KBM-7 (cell line): ENCODE measurements at regions of chr12 and their contacts with region 1.

Region 1: DNA sequence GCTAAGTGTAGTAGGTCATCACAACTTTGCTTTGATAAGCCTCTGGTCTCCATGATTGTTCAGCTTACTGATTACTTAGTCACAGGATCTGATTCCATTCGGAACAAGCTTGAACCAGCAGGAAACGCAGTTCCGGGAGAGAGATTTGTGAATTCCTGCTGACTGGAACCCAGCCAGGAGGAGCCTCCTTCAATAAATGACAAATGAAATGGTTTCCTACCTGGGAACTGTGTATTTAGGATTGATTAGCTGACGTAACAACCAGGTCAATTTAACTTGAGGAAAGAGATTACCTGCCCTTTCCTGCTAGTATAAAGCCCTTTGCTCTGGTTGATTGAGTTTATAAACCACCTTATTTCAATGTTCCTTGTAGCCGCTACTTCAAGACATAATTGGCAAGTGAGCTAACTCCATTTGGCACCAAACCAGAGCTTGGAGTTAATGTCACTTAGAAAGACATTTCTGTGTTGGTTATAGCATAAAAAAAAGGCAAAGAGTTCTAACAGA is 35.1 kb upstream of the KCNH3 start:
- DNase-seq: no peak

Region 2: DNA sequence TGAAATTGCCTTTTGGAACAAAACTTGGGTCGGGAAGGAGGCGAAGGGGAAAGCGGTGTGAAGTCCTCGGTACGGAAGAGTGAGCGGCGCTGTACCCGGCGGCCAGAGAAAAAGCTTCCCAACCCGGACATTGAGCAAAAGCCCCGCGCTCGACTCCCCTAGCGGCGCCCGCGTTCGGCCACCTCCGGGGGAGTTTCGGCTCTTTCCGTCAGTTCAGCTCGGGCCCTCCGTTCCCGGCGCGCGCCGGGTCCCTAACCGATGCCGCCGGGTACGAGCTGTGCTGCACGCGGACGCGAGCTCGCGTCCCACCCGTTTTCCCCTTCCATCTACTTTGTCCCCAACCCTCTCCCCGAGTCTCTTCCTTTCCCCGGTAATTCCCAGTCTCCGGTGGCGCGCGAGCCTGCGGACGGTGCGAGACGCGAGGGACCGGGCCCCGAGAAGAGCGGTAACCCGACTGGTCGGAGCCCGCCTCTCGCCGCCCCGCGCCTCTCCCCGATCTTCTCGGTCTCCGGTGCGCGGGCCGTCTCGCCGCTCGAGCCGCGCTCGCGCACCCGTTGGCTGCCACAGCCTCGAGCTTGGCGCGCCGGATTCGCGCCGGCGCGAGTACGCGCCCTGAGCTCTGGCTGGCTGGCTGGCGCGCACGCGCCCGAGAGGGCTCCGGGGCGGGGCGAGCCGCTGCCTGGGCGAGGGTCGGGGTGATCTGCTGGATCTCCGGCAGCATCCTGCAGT is 136.9 kb before region 1 on chr12:
- in situ Hi-C with region 1: loop called (anchors 10 kb)
- DNase-seq: peak; percentile 96

Region 3: GRCh38 chr12:49462083-49462744 is 41.5 kb before region 1 on chr12:
- in situ Hi-C with region 1: no loop called
- DNase-seq: peak; percentile 13